ENCODE measurements at regions of chr6 and their contacts with region 1.

Region 1: DNA sequence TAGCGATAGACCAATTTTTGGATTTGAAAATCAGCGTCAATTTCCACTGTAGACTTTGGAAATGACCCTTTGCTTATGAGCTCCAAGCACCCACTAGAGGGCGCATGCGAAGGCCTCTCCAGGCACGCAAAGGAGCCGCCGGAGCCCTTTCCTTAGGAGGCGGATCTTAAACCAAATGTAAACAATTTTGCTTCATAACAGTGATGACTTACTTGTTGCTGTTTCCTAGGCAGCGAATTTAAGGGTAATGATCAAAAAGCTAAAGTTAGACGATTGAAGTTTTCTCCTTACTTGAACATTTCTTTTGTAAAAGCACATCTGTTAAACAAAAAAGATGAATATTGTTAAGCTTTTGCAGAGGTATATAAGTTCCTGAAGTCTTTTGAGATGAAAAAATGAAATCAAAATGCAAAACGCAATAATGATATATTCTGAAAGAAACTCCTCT is 29.2 kb upstream of the EXOC2 start:
- DNase-seq: peak; percentile 90
- ATAC-seq: peak; percentile 93
- H3K4me3 Mint-ChIP-seq: no peak overlapping the region
- H3K27ac Mint-ChIP-seq: no peak overlapping the region
- H3K4me1 Mint-ChIP-seq: no peaks in the 10 kb centered on the region
- H3K27me3 Mint-ChIP-seq: peaks cover 18% of the 10 kb centered on the region

Region 2: DNA sequence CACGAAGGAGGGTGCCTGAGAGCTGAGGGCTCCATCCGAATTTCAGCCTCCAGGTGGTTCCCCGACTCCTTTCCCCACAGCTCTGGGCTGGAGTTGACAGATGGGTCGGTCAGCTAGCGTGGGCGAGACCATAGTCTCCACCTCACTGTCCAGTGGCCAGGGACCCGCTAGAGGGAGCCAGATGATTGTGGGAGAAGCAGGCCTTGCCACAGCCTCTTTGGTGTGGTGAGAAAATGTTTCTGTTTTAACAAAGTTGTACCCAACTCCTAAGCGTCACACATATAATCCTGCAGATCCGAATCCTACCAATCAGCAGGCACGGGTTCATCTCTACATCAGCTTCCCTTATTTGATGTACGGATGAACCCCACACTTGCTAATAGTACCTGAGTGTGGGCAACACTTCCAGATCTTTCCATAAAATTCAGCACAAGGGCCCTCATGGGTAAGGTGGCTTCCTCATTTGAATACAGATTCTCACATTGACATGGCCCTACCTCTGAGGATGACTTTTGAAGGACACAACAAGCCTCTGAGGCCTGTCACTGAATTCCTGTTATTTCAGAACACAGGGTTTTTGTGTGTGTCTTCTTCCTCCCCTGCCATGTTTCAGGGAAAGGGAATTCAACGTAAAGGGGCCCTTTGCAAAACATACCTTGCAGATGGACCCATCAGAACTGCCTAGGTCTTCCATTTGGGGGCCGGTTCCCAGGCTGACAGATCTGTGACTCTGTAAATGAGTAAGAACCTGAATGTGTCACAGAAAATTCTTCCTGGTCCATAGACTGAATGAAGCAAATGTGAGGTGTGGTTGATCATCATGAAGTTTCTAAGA is 533.1 kb before region 1 on chr6:
- CTCF ChIA-PET with region 1: no interaction called
- POLR2A ChIA-PET with region 1: no interaction called
- intact Hi-C with region 1: loop called in 1 of 2 experiments (anchors 5 kb)
- DNase-seq: peak; percentile 92
- ATAC-seq: peak; percentile 78
- H3K4me3 Mint-ChIP-seq: no peak overlapping the region
- H3K27ac Mint-ChIP-seq: peak overlapping the region; percentile 95
- H3K4me1 Mint-ChIP-seq: peaks cover 52% of the 10 kb centered on the region
- H3K27me3 Mint-ChIP-seq: peaks cover 3% of the 10 kb centered on the region

Region 3: GRCh38 chr6:710601-711571 is 11.2 kb before region 1 on chr6:
- CTCF ChIA-PET with region 1: interaction called, 15 read pairs
- POLR2A ChIA-PET with region 1: interaction called, 4 read pairs
- intact Hi-C with region 1: no loop called
- DNase-seq: peak; percentile 59
- ATAC-seq: peak; percentile 92
- H3K4me3 Mint-ChIP-seq: peak overlapping the region; percentile 80
- H3K27ac Mint-ChIP-seq: peak overlapping the region; percentile 97
- H3K4me1 Mint-ChIP-seq: peaks cover 22% of the 10 kb centered on the region
- H3K27me3 Mint-ChIP-seq: peaks cover 6% of the 10 kb centered on the region

Region 4: GRCh38 chr6:786946-787763 is 65.1 kb after region 1 on chr6:
- CTCF ChIA-PET with region 1: interaction called, 8 read pairs
- POLR2A ChIA-PET with region 1: no interaction called
- intact Hi-C with region 1: loop called in 1 of 2 experiments (anchors 2 kb)
- DNase-seq: peak; percentile 36
- ATAC-seq: peak; percentile 53
- H3K4me3 Mint-ChIP-seq: no peak overlapping the region
- H3K27ac Mint-ChIP-seq: peak overlapping the region; percentile 40
- H3K4me1 Mint-ChIP-seq: peaks cover 20% of the 10 kb centered on the region
- H3K27me3 Mint-ChIP-seq: peaks cover 12% of the 10 kb centered on the region

Region 5: GRCh38 chr6:1070085-1070521 is 348.0 kb after region 1 on chr6:
- CTCF ChIA-PET with region 1: no interaction called
- POLR2A ChIA-PET with region 1: no interaction called
- intact Hi-C with region 1: no loop called
- DNase-seq: no peak
- ATAC-seq: no peak
- H3K4me3 Mint-ChIP-seq: no peak overlapping the region
- H3K27ac Mint-ChIP-seq: no peak overlapping the region
- H3K4me1 Mint-ChIP-seq: no peaks in the 10 kb centered on the region
- H3K27me3 Mint-ChIP-seq: peaks cover 14% of the 10 kb centered on the region

Region 6: GRCh38 chr6:1396952-1397868 is 675.1 kb after region 1 on chr6:
- CTCF ChIA-PET with region 1: interaction called, 3 read pairs
- POLR2A ChIA-PET with region 1: no interaction called
- intact Hi-C with region 1: loop called (anchors 5 to 10 kb)
- DNase-seq: peak; percentile 85
- ATAC-seq: peak; percentile 75
- H3K4me3 Mint-ChIP-seq: no peak overlapping the region
- H3K27ac Mint-ChIP-seq: no peak overlapping the region
- H3K4me1 Mint-ChIP-seq: peaks cover 4% of the 10 kb centered on the region
- H3K27me3 Mint-ChIP-seq: peaks cover 51% of the 10 kb centered on the region

Measured in activated CD4-positive, alpha-beta T cell treated with anti-CD3 and anti-CD28 coated beads for 36 hours (primary cell).